ENCODE measurements at regions of chr3 and their contacts with region 1.

Region 1: GRCh38 chr3:42991341-42992315 is 12.5 kb downstream of the GASK1A start:
- DNase-seq: no peak
- H3K4me3 ChIP-seq: no peak overlapping the region
- H3K27ac ChIP-seq: no peak overlapping the region
- H3K4me1 ChIP-seq: no peaks in the 10 kb centered on the region
- H3K27me3 ChIP-seq: peaks cover 0 to 4% of the 10 kb centered on the region in 2 experiments
- CTCF ChIP-seq: no peak
- POLR2A ChIP-seq: no peak

Region 2: GRCh38 chr3:42581709-42582473 is 409.7 kb before region 1 on chr3 and contains the start of gene SEC22C:
- CTCF ChIA-PET with region 1: no interaction called
- POLR2A ChIA-PET with region 1: no interaction called
- dilution Hi-C with region 1: no loop called
- intact Hi-C with region 1: no loop called
- DNase-seq: peak; percentile 94
- H3K4me3 ChIP-seq: peak within 1 kb of the TSS; percentile 80 to 82 (median 81)
- H3K27ac ChIP-seq: peak within 1 kb of the TSS; percentile 70
- H3K4me1 ChIP-seq: peaks cover 18% of the 10 kb centered on the region
- H3K27me3 ChIP-seq: no peaks in the 10 kb centered on the region
- CTCF ChIP-seq: peak in 1 of 2 donors; percentile 24
- POLR2A ChIP-seq: peak; percentile 76
- total RNA-seq, gene SEC22C: 60.7 and 61.9 TPM in 2 replicates

Region 3: DNA sequence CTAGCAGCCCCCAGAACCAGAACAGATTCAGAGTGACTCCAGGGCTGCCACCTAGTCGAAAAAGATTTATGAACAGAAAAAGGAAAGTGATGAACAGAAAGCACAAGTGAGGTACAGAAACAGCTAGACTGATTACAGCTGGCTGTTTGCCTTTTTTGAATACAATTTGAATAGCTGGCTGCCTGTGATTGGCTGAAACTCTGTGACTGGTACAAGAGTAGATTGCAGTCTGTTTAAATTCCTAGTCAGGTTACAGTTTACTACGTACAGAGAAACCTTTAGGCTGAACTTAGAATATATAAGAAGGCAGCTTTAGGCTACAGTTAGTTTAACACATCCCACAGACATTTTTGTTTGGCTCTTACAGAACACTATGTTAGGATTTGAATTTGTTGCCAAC is 228.6 kb before region 1 on chr3:
- CTCF ChIA-PET with region 1: no interaction called
- POLR2A ChIA-PET with region 1: no interaction called
- dilution Hi-C with region 1: no loop called
- intact Hi-C with region 1: no loop called
- DNase-seq: no peak
- H3K4me3 ChIP-seq: no peak overlapping the region
- H3K27ac ChIP-seq: no peak overlapping the region
- H3K4me1 ChIP-seq: no peaks in the 10 kb centered on the region
- H3K27me3 ChIP-seq: peaks cover 0 to 2% of the 10 kb centered on the region in 2 experiments
- CTCF ChIP-seq: no peak
- POLR2A ChIP-seq: no peak

Region 4: DNA sequence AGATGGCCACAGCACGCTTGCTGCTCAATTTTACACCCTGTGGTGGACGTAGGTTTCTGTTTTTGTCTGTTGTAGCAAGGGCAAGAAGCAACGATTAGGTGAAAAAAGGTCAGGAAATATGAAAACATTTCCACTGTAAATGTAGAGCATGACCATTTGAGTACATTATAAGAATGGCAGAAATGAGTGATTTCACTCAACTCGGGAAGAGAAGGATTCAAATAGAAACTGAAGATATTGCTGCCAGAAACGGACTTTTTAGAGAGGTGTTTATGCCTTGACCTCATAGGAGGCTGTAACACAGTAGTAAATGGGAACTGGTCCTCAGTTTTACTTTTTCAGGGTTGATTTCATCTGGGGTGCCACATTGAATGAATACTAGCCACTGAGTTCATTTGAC is 45.6 kb before region 1 on chr3:
- CTCF ChIA-PET with region 1: no interaction called
- POLR2A ChIA-PET with region 1: no interaction called
- dilution Hi-C with region 1: no loop called
- intact Hi-C with region 1: loop called (anchors 1 kb)
- DNase-seq: no peak
- H3K4me3 ChIP-seq: no peak overlapping the region
- H3K27ac ChIP-seq: no peak overlapping the region
- H3K4me1 ChIP-seq: no peaks in the 10 kb centered on the region
- H3K27me3 ChIP-seq: peaks cover 0 to 5% of the 10 kb centered on the region in 2 experiments
- CTCF ChIP-seq: no peak
- POLR2A ChIP-seq: no peak

Measured in endothelial cell of umbilical vein (primary cell).